Psoas muscle (tissue), 8 donors: ENCODE measurements at regions of chr9 and their contacts with region 1.

Region 1: DNA sequence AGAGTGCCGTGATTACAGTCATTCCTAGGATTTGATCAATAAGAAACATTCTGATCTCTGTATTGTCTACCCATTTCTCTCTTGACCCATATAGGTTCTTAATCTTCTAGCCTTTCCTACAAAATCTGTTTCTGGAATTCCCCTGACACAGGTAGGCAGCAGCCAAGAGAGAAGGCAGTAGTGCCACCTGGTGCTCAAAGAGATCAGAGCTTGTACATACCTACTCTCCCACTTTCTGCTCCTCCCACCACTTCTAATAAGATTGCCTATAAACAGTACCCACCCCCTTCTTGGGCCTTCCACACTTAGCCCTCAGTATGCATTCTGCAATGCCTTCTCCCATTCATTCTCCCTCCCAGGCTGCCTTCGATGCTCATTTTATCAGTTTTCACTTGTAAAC is 117.4 kb upstream of the RORB start:
- DNase-seq: no peak
- ATAC-seq: no peak
- H3K4me3 ChIP-seq: no peak overlapping the region
- H3K27ac ChIP-seq: no peak overlapping the region
- H3K4me1 ChIP-seq: no peaks in the 10 kb centered on the region
- H3K27me3 ChIP-seq: no peaks in the 10 kb centered on the region
- CTCF ChIP-seq: no peak

Region 2: DNA sequence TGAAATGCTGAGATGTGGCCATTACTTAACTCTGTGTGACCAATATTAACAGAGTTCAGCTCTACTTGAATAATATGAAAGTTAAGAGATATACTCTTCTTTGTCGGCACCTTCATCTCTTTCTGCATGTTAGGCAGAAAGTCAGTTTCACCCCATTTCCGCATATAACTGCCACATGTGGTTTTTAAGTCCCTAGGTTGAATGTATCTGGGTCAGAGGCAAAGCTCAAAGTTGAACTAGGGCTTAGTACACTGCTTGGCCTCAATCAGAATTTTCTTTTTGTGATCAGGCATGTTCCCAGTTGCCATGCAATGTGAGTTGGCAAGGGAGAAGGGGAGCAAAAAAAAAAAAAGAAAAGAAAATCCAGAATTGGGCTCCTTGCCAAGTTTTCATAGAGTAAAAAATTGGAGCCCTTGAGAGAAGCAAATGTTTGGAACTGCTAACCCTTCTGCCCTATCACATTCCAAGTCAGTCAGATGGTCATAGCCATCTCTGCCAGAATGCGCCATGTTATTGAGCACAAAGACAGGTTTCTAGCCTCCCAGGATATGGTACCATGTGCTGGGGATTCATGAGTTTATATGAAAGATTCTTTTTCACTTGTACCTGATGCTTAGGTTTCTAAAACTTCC is 133.7 kb before region 1 on chr9:
- intact Hi-C with region 1: loop called in 1 of 2 experiments (anchors 5 kb)
- DNase-seq: no peak
- ATAC-seq: no peak
- H3K4me3 ChIP-seq: no peak overlapping the region
- H3K27ac ChIP-seq: no peak overlapping the region
- H3K4me1 ChIP-seq: no peaks in the 10 kb centered on the region
- H3K27me3 ChIP-seq: no peaks in the 10 kb centered on the region
- CTCF ChIP-seq: no peak

Region 3: DNA sequence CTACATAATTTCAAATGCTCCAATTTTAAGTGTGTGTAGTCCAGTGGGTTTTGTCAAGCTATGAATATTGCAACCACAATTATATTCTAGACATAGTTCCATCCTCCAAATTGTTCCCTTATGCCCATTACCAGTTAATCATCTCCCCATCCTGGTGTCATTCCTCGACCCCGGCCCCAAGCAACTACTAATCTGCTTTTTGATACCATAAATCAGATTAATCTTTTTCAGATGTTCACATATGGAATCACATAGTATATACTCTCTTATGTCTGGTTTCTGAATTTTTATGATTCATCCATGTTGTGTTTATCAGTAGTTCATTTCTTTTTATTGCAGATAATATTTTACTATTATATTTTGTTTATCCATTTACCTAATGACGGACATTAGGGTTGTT is 30.9 kb before region 1 on chr9:
- intact Hi-C with region 1: no loop called
- DNase-seq: no peak
- ATAC-seq: no peak
- H3K4me3 ChIP-seq: no peak overlapping the region
- H3K27ac ChIP-seq: no peak overlapping the region
- H3K4me1 ChIP-seq: no peaks in the 10 kb centered on the region
- H3K27me3 ChIP-seq: no peaks in the 10 kb centered on the region
- CTCF ChIP-seq: no peak